Naive thymus-derived CD4-positive, alpha-beta T cell (primary cell): ENCODE measurements at regions of chr12 and their contacts with region 1.

Region 1: DNA sequence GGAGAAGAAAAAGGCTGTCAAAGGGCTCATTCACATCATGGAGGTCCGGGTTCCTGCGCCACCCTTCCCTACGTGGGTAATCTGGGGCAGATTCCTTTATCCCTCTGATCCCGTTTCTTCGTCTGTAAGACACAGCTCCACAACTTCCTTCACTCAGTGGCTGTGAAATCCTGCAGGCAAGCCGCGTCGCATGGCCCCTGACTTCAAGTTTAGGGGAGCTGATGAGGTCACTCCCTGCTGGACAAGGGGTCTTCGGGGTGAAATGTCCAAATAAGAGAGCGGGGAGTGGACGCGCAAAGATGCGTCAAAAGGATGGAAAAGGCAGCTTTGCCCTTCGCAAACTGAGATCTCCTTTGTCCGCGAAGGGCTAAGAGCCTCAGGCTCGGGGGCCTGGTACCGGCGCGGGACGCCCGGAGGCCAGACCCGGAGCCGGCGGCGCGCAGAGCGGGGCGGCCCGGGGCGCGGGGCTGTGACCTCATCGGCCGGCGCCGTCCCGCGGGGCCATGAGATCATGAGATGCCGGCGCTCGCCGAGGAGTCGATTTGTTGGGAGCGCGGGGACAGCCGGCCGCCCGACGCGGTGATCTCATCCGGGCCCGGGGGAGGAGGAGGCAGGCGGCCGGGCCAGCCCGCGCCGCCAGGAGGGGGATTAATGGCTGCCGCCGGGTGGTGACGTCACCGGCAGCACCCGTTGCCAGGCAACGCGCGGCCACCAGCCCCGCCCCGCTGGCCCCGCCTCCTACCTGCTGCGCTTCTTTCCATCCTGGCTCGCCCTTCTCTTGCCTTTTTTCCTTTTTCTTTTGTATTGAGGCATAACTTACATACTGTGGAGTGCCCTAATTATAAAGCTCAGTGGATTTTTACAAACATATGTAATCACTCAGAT is 62.1 kb downstream of the HRK start:
- DNase-seq: peak; percentile 86 to 94 (median 91)
- ATAC-seq: peak; percentile 90
- H3K4me3 ChIP-seq: peak overlapping the region; percentile 99
- H3K4me3 Mint-ChIP-seq: peak overlapping the region; percentile 78 to 99 (median 94)
- H3K27ac ChIP-seq: peak overlapping the region; percentile 97
- H3K27ac Mint-ChIP-seq: peak overlapping the region; percentile 87 to 99 (median 96)
- H3K4me1 ChIP-seq: peaks cover 7 to 11% of the 10 kb centered on the region in 2 donors
- H3K4me1 Mint-ChIP-seq: peaks cover 12 to 31% (median 24%) of the 10 kb centered on the region in 7 donors
- H3K27me3 ChIP-seq: no peaks in the 10 kb centered on the region
- H3K27me3 Mint-ChIP-seq: no peaks in the 10 kb centered on the region

Region 2: DNA sequence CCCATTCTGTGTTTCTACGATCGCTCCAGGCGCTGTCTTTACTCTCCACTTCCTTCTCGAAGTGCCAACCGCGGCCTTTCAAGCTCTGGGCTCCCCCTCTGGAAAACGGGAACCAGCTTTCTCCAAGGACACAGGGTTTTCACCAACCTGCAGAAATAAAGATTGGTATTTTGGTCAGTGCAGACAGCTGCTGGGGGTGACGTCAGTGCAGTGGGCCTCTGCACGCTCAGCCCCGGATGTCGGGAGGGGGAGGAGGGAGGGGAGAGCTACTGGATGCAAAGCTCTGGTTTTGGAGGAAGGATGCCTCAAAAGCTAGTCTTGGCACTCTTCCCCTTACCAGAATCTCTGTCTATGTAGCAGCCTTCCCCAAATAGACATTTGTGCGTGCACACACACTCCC is 42.1 kb after region 1 on chr12:
- CTCF ChIA-PET with region 1: no interaction called
- POLR2A ChIA-PET with region 1: no interaction called
- intact Hi-C with region 1: no loop called
- DNase-seq: peak in 3 of 9 donors; percentile 25 to 31 (median 31)
- ATAC-seq: peak; percentile 49
- H3K4me3 ChIP-seq: no peak overlapping the region
- H3K4me3 Mint-ChIP-seq: peak overlapping the region in 1 of 10 donors; percentile 14
- H3K27ac ChIP-seq: no peak overlapping the region
- H3K27ac Mint-ChIP-seq: no peak overlapping the region
- H3K4me1 ChIP-seq: no peaks in the 10 kb centered on the region
- H3K4me1 Mint-ChIP-seq: peaks cover 4 to 14% (median 8%) of the 10 kb centered on the region in 7 donors
- H3K27me3 ChIP-seq: no peaks in the 10 kb centered on the region
- H3K27me3 Mint-ChIP-seq: peaks cover 27 to 42% (median 31%) of the 10 kb centered on the region in 5 donors

Region 3: GRCh38 chr12:116910645-116911451 is 91.7 kb after region 1 on chr12 and contains the start of gene FBXW8:
- CTCF ChIA-PET with region 1: no interaction called
- POLR2A ChIA-PET with region 1: interaction called, 5 read pairs
- intact Hi-C with region 1: loop called (anchors 1 kb)
- DNase-seq: peak; percentile 23 to 73 (median 44)
- ATAC-seq: peak; percentile 92
- H3K4me3 ChIP-seq: peak within 1 kb of the TSS; percentile 65
- H3K4me3 Mint-ChIP-seq: peak within 1 kb of the TSS; percentile 89 to 97 (median 93)
- H3K27ac ChIP-seq: peak within 1 kb of the TSS; percentile 61
- H3K27ac Mint-ChIP-seq: peak within 1 kb of the TSS; percentile 65 to 91 (median 83)
- H3K4me1 ChIP-seq: peaks cover 0 to 6% of the 10 kb centered on the region in 2 donors
- H3K4me1 Mint-ChIP-seq: peaks cover 21 to 48% (median 39%) of the 10 kb centered on the region in 7 donors
- H3K27me3 ChIP-seq: no peaks in the 10 kb centered on the region
- H3K27me3 Mint-ChIP-seq: peaks cover 0 to 30% (median 0%) of the 10 kb centered on the region in 5 donors
- total RNA-seq, gene FBXW8: 10.8 to 13.2 (median 12.6) TPM

Region 4: DNA sequence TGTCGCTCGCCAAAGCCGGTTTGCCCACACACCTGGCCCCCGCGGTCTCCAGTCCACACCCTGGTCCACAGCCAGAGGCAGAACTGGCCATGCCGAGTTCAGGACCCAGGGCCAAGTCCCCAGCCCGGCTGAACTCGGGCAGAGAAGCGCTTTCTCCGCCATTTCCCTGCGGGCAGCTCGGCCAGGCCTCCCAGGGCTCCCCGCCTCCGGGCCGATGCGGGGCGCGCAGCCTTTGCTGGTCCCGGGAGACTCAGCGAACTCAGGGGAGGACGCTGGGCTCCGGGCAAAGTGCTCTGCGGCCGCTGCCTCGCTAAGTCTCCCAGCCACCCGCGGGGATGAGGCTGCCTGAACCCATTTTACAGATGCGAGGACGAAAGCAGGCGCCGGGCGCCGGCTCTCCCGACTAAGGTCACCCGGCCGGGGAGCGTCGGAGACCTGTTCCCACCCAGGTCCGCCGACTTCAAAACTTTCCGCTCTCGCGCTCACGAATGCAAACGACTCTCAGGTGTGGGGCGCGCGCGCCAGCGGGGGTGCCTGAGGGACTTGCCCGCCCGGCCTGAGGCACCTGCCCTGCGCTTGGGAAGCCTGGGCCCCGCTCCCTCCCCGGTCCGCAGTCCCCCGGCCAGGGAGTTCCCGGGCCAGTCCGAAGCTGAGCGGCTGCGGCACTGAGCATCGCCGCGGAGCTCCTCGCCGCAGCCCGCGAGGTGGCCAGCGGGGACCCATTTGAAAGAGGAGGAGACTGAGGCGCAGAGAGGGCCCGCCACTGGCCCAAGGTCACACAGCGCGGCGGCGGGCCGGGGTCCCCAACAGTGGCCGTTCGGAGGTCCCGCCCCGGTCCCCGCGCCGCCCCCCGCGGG is 279.4 kb after region 1 on chr12:
- CTCF ChIA-PET with region 1: no interaction called
- POLR2A ChIA-PET with region 1: no interaction called
- intact Hi-C with region 1: loop called in 1 of 2 experiments (anchors 1 kb)
- DNase-seq: peak in 3 of 9 donors; percentile 8 to 11 (median 11)
- ATAC-seq: peak; percentile 30
- H3K4me3 ChIP-seq: peak overlapping the region; percentile 56
- H3K4me3 Mint-ChIP-seq: peak overlapping the region; percentile 68 to 85 (median 79)
- H3K27ac ChIP-seq: no peak overlapping the region
- H3K27ac Mint-ChIP-seq: peak overlapping the region in 1 of 9 donors; percentile 23
- H3K4me1 ChIP-seq: peaks cover 4 to 5% of the 10 kb centered on the region in 2 donors
- H3K4me1 Mint-ChIP-seq: peaks cover 0 to 27% (median 9%) of the 10 kb centered on the region in 7 donors
- H3K27me3 ChIP-seq: peaks cover 0 to 10% of the 10 kb centered on the region in 2 donors
- H3K27me3 Mint-ChIP-seq: peaks cover 16 to 37% (median 21%) of the 10 kb centered on the region in 5 donors